ENCODE measurements at regions of chr17 and their contacts with region 1.

Region 1: GRCh38 chr17:559551-560431 is 154.8 kb downstream of the VPS53 start:
- DNase-seq: no peak
- H3K4me3 ChIP-seq: no peak overlapping the region
- H3K27ac ChIP-seq: peak overlapping the region in 2 of 3 donors; percentile 13 to 82
- H3K4me1 ChIP-seq: peaks cover 0 to 21% of the 10 kb centered on the region in 2 donors
- H3K27me3 ChIP-seq: no peaks in the 10 kb centered on the region
- CTCF ChIP-seq: no peak
- POLR2A ChIP-seq: no peak

Region 2: GRCh38 chr17:393806-394717 is 165.7 kb before region 1 on chr17:
- intact Hi-C with region 1: no loop called
- DNase-seq: no peak
- H3K4me3 ChIP-seq: no peak overlapping the region
- H3K27ac ChIP-seq: no peak overlapping the region
- H3K4me1 ChIP-seq: no peaks in the 10 kb centered on the region
- H3K27me3 ChIP-seq: no peaks in the 10 kb centered on the region
- CTCF ChIP-seq: no peak
- POLR2A ChIP-seq: no peak

Region 3: DNA sequence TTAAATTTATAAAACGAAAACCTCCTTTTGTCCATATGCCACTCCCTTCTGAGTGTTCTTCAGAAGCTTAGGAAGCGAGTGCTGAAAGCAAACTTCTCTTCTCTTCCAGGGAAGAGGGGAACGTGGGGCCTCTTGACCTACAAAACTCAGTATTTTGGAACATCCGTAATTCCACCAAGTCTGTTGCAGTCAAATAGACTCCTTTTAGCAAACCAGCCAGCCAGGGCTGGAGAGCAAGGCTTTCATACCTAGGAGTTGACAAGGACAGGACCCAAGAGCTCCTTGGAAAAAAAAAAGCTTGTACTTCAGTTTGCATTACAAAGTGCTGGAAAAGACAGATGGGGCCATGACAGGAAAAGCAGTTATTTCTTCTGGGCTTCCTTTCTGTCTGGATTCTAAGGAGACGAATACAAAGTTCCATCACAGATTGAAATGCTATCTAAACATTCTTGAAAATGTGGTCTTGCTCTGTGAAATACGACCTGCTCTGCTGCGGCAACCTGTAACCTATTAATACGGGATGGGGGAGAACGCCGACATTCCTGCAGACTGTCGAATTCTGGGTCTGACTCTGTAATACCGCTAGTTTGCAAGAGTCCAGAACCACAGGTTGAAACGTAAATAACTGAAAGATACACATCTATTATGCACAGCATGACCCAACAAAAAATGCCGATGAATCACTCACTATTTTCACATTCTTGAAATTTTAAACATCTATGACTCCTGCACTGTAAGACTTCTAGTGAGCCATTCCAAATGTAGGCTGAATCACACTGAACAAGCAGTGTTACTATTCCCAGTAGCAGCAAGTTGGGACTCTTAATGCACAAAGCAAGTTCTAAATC is 134.2 kb after region 1 on chr17:
- intact Hi-C with region 1: loop called (anchors 10 kb)
- DNase-seq: no peak
- H3K4me3 ChIP-seq: no peak overlapping the region
- H3K27ac ChIP-seq: no peak overlapping the region
- H3K4me1 ChIP-seq: peaks cover 8 to 15% of the 10 kb centered on the region in 2 donors
- H3K27me3 ChIP-seq: no peaks in the 10 kb centered on the region
- CTCF ChIP-seq: no peak
- POLR2A ChIP-seq: no peak

Measured in thyroid gland (tissue), 4 donors.